ENCODE measurements at regions of chr3 and their contacts with region 1.

Region 1: GRCh38 chr3:191158815-191159214 is 40.2 kb upstream of the OSTN start:
- DNase-seq: no peak
- H3K4me3 ChIP-seq: no peak overlapping the region
- H3K27ac ChIP-seq: no peak overlapping the region
- H3K4me1 ChIP-seq: no peaks in the 10 kb centered on the region
- CTCF ChIP-seq: no peak

Region 2: GRCh38 chr3:190959077-190959476 is 199.7 kb before region 1 on chr3:
- CTCF ChIA-PET with region 1: no interaction called
- POLR2A ChIA-PET with region 1: no interaction called
- intact Hi-C with region 1: no loop called
- DNase-seq: no peak
- H3K4me3 ChIP-seq: no peak overlapping the region
- H3K27ac ChIP-seq: no peak overlapping the region
- H3K4me1 ChIP-seq: no peaks in the 10 kb centered on the region
- CTCF ChIP-seq: no peak

Region 3: GRCh38 chr3:191148131-191148530 is 10.7 kb before region 1 on chr3:
- CTCF ChIA-PET with region 1: no interaction called
- POLR2A ChIA-PET with region 1: interaction called, 14 read pairs
- intact Hi-C with region 1: no loop called
- DNase-seq: no peak
- H3K4me3 ChIP-seq: no peak overlapping the region
- H3K27ac ChIP-seq: no peak overlapping the region
- H3K4me1 ChIP-seq: peaks cover 30% of the 10 kb centered on the region
- CTCF ChIP-seq: no peak

Measured in OCI-LY7 (cell line).